ENCODE measurements at regions of chr16 and their contacts with region 1.

Region 1: GRCh38 chr16:29943846-29944669 is 17.8 kb upstream of the TMEM219 start:
- DNase-seq: peak; percentile 99
- ATAC-seq: peak; percentile 99
- H3K4me3 ChIP-seq: no peak overlapping the region
- H3K27ac ChIP-seq: peak overlapping the region; percentile 82
- H3K4me1 ChIP-seq: peaks cover 4% of the 10 kb centered on the region
- H3K27me3 ChIP-seq: no peaks in the 10 kb centered on the region
- CTCF ChIP-seq: peak; percentile 56
- POLR2A ChIP-seq: peak; percentile 75
- RAD21 ChIP-seq: peak; percentile 52

Region 2: DNA sequence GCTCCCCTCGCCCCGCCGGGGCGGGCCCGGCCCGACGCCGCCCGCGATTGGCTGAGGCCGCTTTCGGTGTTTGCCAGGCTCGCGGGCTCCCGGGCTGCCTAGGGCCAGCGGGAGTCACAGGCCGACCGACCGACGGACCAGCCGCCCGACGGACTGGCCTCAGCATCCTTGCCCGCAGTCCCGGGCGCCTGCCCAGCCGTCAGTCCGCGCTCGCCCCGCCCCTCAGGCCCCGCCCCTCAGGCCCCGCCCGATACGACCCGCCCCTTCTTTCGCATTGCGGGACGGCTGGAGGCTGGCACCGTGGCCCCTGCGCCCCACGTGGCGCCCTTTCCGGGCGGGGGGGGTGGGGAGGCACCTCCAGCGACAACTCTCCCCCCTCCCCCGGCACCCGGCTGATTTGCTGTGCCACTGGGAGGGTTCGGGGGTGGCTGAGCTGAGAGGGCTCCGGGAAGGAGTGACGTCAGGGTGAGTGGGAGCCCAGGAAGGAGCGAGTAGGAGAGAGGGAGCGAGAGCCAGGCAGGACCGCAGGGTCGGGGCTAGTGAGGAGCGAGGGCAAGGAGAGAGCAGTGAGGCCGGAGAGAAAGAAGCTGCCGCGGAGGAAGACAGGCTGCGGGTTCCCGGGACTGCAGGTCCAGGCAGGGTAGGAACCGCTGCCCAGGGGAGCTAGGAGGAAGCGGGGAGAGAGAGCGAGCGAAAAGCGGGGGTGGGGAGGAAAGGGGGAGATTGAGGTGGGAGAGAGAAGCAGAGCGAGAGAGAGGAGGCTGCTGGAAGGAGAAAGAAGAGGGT is 43.8 kb before region 1 on chr16 and contains the start of gene ASPHD1:
- CTCF ChIA-PET with region 1: no interaction called
- POLR2A ChIA-PET with region 1: no interaction called
- dilution Hi-C with region 1: no loop called
- in situ Hi-C with region 1: no loop called
- intact Hi-C with region 1: loop called (anchors 1 kb)
- DNase-seq: peak; percentile 86
- ATAC-seq: peak; percentile 79
- H3K4me3 ChIP-seq: peak within 1 kb of the TSS; percentile 87
- H3K27ac ChIP-seq: peak within 1 kb of the TSS; percentile 88
- H3K4me1 ChIP-seq: peaks cover 10% of the 10 kb centered on the region
- H3K27me3 ChIP-seq: peaks cover 5% of the 10 kb centered on the region; the same call in 1 of the 2 replicates
- CTCF ChIP-seq: no peak
- POLR2A ChIP-seq: peak; percentile 84
- RAD21 ChIP-seq: no peak
- total RNA-seq, gene ASPHD1: 4.1 and 4.2 TPM in 2 replicates

Region 3: DNA sequence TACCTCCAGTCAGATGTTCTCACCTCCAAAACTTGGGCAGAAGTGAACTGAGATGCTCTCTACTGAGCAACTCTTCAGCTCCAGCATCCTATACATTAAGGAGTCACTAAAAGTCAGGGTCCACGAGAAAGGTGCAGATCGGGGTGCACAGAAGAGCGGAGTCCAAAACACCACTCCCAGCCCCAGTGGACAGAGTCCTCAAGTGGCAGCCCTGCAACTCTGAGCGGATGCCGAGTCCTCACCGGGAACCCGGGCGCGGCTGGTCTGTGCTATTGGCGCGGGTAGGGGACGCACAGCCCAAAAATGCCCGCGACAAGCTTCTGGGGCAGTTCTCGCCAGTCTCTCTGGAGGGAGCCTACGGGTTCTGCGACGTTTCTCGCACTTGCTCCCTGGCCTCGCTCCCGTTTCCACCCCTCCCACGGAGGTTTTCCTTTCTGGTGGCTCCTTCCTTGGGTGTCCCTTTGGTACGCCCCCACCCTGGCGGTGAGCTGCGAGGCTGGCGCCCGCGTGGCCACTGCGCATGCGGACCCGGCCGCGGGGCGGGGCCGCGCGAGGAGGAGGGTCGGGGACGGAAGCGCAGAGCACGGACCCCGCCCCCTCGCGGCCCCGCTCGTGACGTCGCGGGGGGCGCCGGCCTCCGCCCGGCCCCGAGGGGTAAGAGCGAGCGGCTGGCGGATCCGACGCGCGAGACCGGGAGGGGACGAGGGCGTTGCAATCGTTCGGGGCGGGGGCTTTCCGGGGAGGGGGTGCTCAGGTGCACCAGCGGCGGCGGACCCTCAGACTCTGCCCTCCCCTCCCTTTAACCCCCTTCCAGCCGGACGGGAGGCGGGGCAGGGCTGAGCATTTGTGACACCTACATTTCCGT is 17.7 kb after region 1 on chr16 and contains the start of gene TMEM219:
- CTCF ChIA-PET with region 1: interaction called, 4 read pairs
- POLR2A ChIA-PET with region 1: interaction called, 7 read pairs
- dilution Hi-C with region 1: no loop called
- in situ Hi-C with region 1: no loop called
- intact Hi-C with region 1: loop called (anchors 1 kb)
- DNase-seq: peak; percentile 83
- ATAC-seq: peak; percentile 98
- H3K4me3 ChIP-seq: peak within 1 kb of the TSS; percentile 55
- H3K27ac ChIP-seq: peak within 1 kb of the TSS; percentile 81
- H3K4me1 ChIP-seq: peaks cover 8% of the 10 kb centered on the region
- H3K27me3 ChIP-seq: no peaks in the 10 kb centered on the region
- CTCF ChIP-seq: peak; percentile 32; the same call in 1 of the 2 replicates
- POLR2A ChIP-seq: peak; percentile 48
- RAD21 ChIP-seq: 0 out of 2 replicates have a peak, but pooled peaks have one; percentile 15
- total RNA-seq, gene TMEM219: 44.2 and 47.0 TPM in 2 replicates